Common myeloid progenitor, CD34-positive (primary cell): ENCODE measurements at regions of chr19 and their contacts with region 1.

Region 1: DNA sequence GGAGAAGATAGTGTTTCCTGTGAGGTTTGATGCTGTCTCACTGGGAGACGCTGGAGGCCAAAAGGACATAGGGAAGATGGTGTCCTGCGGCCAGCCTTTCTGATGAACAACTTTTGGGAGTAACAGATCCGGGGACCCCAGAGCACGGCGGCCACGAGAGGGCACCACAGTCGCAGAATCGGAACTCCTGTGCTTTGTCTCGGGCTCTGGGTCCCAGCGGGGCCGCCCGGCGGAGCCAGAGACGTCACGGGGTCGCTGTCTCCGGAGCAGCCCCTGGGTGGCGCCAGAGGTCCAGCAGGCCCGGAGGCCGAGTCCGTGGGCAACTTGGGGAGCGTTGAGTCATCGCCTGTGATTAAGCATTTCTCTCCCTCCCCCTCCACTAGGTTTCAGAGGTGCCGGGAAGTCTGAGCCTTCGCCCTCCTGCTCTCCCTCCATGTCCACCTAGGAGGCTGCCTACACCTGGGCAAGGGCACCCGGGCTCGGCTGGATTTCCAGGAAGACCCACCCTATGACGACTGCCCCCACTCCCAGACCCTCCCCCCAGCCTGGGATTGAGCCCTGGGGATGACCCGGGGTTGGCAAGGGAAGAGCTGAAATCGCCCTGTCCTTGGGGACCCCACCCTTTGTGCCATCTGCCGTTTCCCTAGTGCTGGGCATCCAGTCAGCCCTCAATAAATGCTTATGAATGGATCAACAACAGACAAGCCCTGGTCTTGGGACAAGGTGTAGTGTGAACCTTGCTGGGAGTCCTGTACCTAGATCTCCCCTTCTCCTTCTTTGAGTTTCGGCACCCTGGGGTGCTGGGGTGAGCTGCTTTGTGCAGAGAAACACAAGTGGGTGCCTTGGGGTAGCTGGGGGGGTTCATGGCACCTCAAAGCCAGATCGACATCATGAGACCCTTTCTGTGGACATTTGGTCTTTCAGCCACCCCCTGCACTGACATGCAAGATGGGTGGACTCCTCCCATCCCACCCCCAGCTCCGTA is 3.4 kb downstream of the NANOS3 start:
- DNase-seq: peak; percentile 95 to 98 (median 97)
- H3K4me3 ChIP-seq: peak overlapping the region in 6 of 7 experiments; percentile 3 to 65 (median 47)
- H3K27ac ChIP-seq: peak overlapping the region in 1 of 2 experiments; percentile 82
- H3K4me1 ChIP-seq: peaks cover 3 to 65% (median 43%) of the 10 kb centered on the region in 4 experiments
- H3K27me3 ChIP-seq: no peaks in the 10 kb centered on the region

Region 2: GRCh38 chr19:14048443-14049153 is 168.2 kb after region 1 on chr19:
- CTCF ChIA-PET with region 1: interaction called, 22 read pairs
- POLR2A ChIA-PET with region 1: no interaction called
- DNase-seq: peak; percentile 64 to 79 (median 70)
- H3K4me3 ChIP-seq: no peak overlapping the region
- H3K27ac ChIP-seq: no peak overlapping the region
- H3K4me1 ChIP-seq: peaks cover 0 to 3% (median 1%) of the 10 kb centered on the region in 4 experiments
- H3K27me3 ChIP-seq: no peaks in the 10 kb centered on the region

Region 3: DNA sequence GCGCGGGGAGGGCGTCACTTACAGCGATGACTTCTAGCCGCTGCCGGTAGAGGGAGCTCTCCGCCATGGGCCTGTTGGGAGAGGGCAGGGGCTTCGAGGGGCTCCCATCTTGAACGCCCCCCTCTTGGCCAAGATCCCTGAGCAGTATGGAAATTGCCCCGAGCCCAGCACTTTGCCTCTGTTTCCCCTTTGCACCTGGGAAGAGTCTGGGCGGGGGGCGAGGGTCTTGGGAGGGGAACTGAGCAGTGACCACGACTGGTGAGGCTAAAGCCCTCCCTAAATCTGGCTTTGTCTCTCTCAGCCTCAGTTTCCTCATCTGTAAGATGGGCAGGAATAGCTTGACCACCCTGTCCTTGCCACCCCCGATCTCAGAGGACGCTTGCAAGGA is 178.7 kb after region 1 on chr19:
- CTCF ChIA-PET with region 1: interaction called, 13 read pairs
- POLR2A ChIA-PET with region 1: no interaction called
- DNase-seq: peak; percentile 44 to 66 (median 63)
- H3K4me3 ChIP-seq: peak overlapping the region in 1 of 7 experiments; percentile 30
- H3K27ac ChIP-seq: no peak overlapping the region
- H3K4me1 ChIP-seq: peaks cover 0 to 18% (median 17%) of the 10 kb centered on the region in 4 experiments
- H3K27me3 ChIP-seq: peaks cover 0 to 49% (median 11%) of the 10 kb centered on the region in 5 experiments

Region 4: DNA sequence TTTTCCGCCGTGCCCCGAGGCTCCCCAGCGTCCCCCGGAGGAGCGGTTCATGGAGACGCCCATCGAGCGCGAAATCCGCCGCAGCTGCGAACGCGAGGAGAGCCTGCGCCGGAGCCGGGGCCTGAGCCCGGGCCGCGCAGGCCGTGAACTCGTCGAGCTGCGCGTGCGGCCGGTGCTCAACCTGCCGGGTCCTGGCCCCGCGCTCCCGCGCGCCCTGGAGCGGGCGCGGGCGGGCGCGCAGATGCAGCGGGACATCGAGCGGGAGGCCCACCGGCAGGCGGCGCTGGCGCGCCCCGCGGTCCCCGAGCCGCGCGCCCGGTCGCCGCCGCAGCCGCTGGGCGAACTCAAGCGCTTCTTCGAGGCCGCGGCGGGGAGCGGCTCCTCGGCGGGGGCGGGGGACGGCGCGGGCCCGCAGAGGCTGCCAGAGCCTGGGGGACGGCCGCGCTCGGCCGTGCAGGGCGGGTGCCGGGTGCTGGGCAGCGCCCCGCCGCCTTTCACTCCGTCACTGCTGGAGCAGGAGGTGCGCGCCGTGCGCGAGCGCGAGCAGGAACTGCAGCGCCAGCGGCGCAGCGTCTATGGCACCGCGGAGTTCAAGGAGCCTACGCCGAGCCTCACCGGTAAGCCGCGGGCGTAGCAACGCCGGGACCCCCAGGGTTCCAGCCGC is 193.0 kb after region 1 on chr19:
- CTCF ChIA-PET with region 1: interaction called, 11 read pairs
- POLR2A ChIA-PET with region 1: no interaction called
- DNase-seq: peak; percentile 76 to 86 (median 86)
- H3K4me3 ChIP-seq: peak overlapping the region; percentile 58 to 83 (median 75)
- H3K27ac ChIP-seq: peak overlapping the region in 1 of 2 experiments; percentile 54
- H3K4me1 ChIP-seq: peaks cover 5 to 44% (median 38%) of the 10 kb centered on the region in 4 experiments
- H3K27me3 ChIP-seq: no peaks in the 10 kb centered on the region

Region 5: DNA sequence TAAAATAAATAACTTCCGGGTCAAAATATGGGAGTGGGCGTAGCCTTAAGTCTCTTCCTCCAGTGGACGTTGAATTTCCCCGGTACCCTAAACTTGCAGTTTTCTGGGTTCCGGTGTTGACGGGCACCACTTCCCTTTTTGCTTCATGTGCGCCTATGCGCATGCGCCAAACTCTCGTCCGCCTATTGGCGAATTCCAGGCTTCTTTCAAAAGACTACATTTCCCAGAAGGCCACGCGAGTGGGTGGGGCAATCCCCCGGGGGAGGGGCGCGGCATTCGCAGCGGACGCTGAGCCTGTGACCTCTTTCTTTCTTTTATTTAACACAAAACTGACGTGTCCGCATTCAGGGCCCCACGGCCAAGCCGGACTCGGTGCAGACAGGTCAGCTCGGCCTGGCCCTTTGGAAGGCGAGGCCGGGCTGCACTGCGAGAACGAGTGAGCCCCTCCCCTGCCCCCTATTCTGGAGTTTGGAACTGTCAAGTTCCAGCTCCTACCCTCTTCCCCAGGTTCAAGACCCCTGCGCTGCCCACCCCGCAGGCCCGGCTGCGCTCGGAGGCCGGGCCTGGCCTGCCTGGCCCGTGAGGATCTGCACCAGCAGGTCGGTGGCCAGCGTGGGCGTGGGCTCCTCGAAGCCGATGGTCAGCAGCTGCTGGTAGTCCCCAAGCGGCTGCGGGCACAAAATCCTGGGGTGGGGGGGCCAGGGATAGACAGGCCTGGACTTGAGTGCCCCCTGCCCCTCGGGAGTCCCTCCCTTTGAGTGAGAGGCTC is 201.2 kb after region 1 on chr19:
- CTCF ChIA-PET with region 1: interaction called, 11 read pairs
- POLR2A ChIA-PET with region 1: no interaction called
- DNase-seq: peak; percentile 99 to 100 (median 99)
- H3K4me3 ChIP-seq: peak overlapping the region; percentile 76 to 91 (median 83)
- H3K27ac ChIP-seq: peak overlapping the region; percentile 79 to 91
- H3K4me1 ChIP-seq: peaks cover 2 to 24% (median 20%) of the 10 kb centered on the region in 4 experiments
- H3K27me3 ChIP-seq: no peaks in the 10 kb centered on the region